ENCODE measurements at regions of chr12 and their contacts with region 1.

Region 1: DNA sequence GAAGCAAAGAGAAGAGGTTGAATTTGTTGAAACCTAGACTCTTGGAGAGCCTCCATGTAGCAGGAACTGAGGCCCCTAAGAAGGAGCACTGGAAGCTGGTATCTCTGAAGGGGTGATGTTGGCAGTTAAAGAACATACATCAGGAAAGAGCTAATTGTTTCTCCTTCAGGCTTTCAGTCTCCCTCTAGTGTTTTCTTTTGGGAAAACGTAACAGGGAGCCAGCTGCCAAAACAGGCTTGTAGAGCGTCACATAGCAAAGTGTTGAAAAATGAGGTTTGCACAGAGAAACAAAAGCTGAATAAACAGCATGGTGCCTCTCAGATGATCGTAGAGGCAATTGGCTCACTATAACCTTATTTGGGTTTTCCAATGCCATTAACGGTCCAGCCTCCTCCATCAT is 46.9 kb upstream of the CAND1 start:
- DNase-seq: peak; percentile 36
- H3K4me3 Mint-ChIP-seq: no peak overlapping the region
- H3K27ac Mint-ChIP-seq: no peak overlapping the region
- H3K4me1 Mint-ChIP-seq: peaks cover 10% of the 10 kb centered on the region
- H3K27me3 Mint-ChIP-seq: peaks cover 5% of the 10 kb centered on the region
- CTCF ChIP-seq: peak; percentile 47

Region 2: DNA sequence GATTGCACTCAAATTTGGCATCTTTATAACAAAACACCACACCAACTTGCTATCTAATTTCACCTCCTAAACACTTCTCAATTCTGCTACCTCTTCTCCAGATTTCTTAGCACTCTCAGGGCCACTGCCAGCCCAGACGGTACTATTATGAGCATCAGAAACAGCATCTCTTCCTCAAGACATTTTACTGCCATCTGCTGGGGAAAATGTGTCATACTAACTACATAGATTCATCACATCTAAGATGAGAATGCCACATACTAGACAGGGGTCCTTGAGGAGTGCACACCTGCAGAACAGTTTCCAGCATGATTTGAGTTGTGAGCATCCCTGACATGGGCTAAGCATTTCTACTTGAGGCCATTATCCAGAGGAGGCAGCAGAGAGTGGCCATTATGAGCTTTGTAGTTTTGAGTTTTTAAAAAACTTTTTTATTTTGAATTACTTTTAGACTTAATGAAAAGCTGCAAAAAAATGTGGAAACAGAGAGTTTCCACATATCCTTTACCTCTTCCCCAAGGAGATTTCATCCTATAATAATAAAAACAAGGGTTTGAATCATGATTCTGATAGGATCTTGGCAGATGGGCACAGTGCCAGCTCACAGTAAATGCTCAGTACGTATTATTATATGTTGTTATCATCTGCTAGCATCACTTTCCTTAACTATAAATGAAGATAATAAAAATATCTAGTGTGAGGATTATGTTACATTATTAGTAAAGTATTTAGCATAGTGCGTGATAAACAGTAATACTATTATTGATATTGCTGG is 528.2 kb before region 1 on chr12:
- CTCF ChIA-PET with region 1: interaction called, 3 read pairs
- intact Hi-C with region 1: loop called (anchors 5 kb)
- DNase-seq: peak; percentile 43
- H3K4me3 Mint-ChIP-seq: no peak overlapping the region
- H3K27ac Mint-ChIP-seq: no peak overlapping the region
- H3K4me1 Mint-ChIP-seq: peaks cover 9% of the 10 kb centered on the region
- H3K27me3 Mint-ChIP-seq: no peaks in the 10 kb centered on the region
- CTCF ChIP-seq: peak; percentile 72

Region 3: GRCh38 chr12:66860752-66861750 is 361.3 kb before region 1 on chr12:
- CTCF ChIA-PET with region 1: no interaction called
- intact Hi-C with region 1: loop called (anchors 1 kb)
- DNase-seq: peak; percentile 76
- H3K4me3 Mint-ChIP-seq: no peak overlapping the region
- H3K27ac Mint-ChIP-seq: no peak overlapping the region
- H3K4me1 Mint-ChIP-seq: peaks cover 20% of the 10 kb centered on the region
- H3K27me3 Mint-ChIP-seq: no peaks in the 10 kb centered on the region
- CTCF ChIP-seq: peak; percentile 87

Region 4: GRCh38 chr12:66903782-66904396 is 318.4 kb before region 1 on chr12:
- CTCF ChIA-PET with region 1: no interaction called
- intact Hi-C with region 1: loop called (anchors 1 kb)
- DNase-seq: no peak
- H3K4me3 Mint-ChIP-seq: no peak overlapping the region
- H3K27ac Mint-ChIP-seq: no peak overlapping the region
- H3K4me1 Mint-ChIP-seq: peaks cover 25% of the 10 kb centered on the region
- H3K27me3 Mint-ChIP-seq: no peaks in the 10 kb centered on the region
- CTCF ChIP-seq: no peak

Region 5: GRCh38 chr12:67025543-67026114 is 196.7 kb before region 1 on chr12:
- CTCF ChIA-PET with region 1: interaction called, 4 read pairs
- intact Hi-C with region 1: loop called (anchors 1 kb)
- DNase-seq: peak; percentile 76
- H3K4me3 Mint-ChIP-seq: no peak overlapping the region
- H3K27ac Mint-ChIP-seq: no peak overlapping the region
- H3K4me1 Mint-ChIP-seq: peaks cover 18% of the 10 kb centered on the region
- H3K27me3 Mint-ChIP-seq: no peaks in the 10 kb centered on the region
- CTCF ChIP-seq: peak; percentile 85

Region 6: GRCh38 chr12:67068761-67069450 is 153.4 kb before region 1 on chr12:
- CTCF ChIA-PET with region 1: no interaction called
- intact Hi-C with region 1: loop called (anchors 10 kb)
- DNase-seq: peak; percentile 85
- H3K4me3 Mint-ChIP-seq: peak overlapping the region; percentile 83
- H3K27ac Mint-ChIP-seq: peak overlapping the region; percentile 69
- H3K4me1 Mint-ChIP-seq: peaks cover 11% of the 10 kb centered on the region
- H3K27me3 Mint-ChIP-seq: no peaks in the 10 kb centered on the region
- CTCF ChIP-seq: no peak

Region 7: GRCh38 chr12:67161322-67161918 is 60.9 kb before region 1 on chr12:
- CTCF ChIA-PET with region 1: interaction called, 5 read pairs
- intact Hi-C with region 1: loop called (anchors 2 kb)
- DNase-seq: peak; percentile 59
- H3K4me3 Mint-ChIP-seq: no peak overlapping the region
- H3K27ac Mint-ChIP-seq: no peak overlapping the region
- H3K4me1 Mint-ChIP-seq: no peaks in the 10 kb centered on the region
- H3K27me3 Mint-ChIP-seq: peaks cover 31% of the 10 kb centered on the region
- CTCF ChIP-seq: peak; percentile 47

Measured in Calu3 (cell line).